ENCODE measurements at regions of chr5 and their contacts with region 1.

Region 1: DNA sequence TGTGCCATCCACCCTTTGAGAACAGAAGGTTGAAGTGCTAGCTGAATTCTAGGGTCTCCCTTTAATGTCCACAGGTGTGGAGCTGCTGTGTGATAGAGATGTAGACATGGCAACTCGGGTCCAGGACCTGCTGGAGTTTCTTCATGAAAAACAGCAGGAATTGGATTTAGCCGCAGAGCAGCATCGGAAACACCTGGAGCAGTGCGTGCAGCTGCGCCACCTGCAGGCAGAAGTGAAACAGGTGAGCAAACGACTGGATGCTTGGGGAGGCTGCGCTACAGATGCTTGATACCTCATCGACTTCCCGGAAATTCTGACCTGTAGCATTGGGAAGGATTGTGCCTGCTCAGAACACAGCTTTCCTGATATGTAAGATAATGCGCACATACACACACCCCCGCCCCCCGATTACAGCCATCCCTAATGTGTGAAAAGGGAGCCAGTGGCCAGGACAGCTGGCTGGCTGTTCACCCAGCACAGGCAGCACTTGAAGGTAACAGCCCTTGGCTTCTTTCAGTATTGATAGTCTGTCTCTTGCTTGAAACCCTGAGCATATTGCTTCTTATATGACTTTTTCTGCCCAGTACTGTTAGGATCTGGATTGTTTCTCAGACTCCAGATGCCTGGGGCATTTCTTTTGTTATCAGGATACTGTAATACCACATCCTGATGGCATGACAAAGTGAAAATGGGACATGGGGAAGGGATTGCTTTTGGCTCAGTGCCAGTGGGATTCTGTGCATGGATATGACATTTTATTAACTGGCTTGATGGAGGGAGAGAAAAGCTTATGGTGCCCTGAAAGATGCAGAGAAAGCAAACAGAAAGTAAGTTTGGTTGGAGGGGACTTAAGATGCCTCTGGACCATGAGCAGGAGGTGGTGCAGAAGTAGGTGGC is 216.8 kb upstream of the OTULINL start:
- DNase-seq: peak; percentile 22
- ATAC-seq: no peak
- H3K4me3 Mint-ChIP-seq: no peak overlapping the region
- H3K27ac Mint-ChIP-seq: peak overlapping the region; percentile 37
- H3K4me1 Mint-ChIP-seq: peaks cover 33% of the 10 kb centered on the region
- H3K27me3 Mint-ChIP-seq: no peaks in the 10 kb centered on the region
- CTCF ChIP-seq: peak; percentile 37

Region 2: DNA sequence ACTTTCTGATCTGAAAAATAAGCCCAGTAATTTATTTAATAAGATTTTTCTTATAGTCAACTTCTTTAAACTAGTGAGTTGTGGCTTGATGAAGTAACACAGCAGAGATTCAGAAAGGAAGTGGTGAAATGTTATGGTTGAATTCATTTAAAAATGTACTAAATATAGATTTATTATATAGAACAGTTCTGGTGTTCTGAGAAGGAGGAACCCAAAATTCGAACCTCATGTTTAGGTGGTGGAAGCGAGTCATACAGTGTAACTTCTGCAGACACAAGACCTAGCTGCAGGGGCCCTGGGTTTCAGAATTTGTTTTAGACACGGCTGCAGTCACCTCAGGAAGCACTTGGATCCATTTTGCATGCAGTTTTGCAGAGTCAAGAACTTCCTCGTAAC is 33.4 kb before region 1 on chr5:
- CTCF ChIA-PET with region 1: interaction called, 10 read pairs
- POLR2A ChIA-PET with region 1: no interaction called
- intact Hi-C with region 1: no loop called
- DNase-seq: peak; percentile 37
- ATAC-seq: peak; percentile 92
- H3K4me3 Mint-ChIP-seq: no peak overlapping the region
- H3K27ac Mint-ChIP-seq: no peak overlapping the region
- H3K4me1 Mint-ChIP-seq: peaks cover 15% of the 10 kb centered on the region
- H3K27me3 Mint-ChIP-seq: no peaks in the 10 kb centered on the region
- CTCF ChIP-seq: no peak

Region 3: GRCh38 chr5:14399054-14399692 is 34.3 kb after region 1 on chr5:
- CTCF ChIA-PET with region 1: interaction called, 11 read pairs
- POLR2A ChIA-PET with region 1: interaction called, 3 read pairs
- intact Hi-C with region 1: no loop called
- DNase-seq: peak; percentile 38
- ATAC-seq: peak; percentile 64
- H3K4me3 Mint-ChIP-seq: no peak overlapping the region
- H3K27ac Mint-ChIP-seq: no peak overlapping the region
- H3K4me1 Mint-ChIP-seq: peaks cover 29% of the 10 kb centered on the region
- H3K27me3 Mint-ChIP-seq: no peaks in the 10 kb centered on the region
- CTCF ChIP-seq: peak; percentile 92

Region 4: GRCh38 chr5:14650052-14650451 is 285.2 kb after region 1 on chr5:
- CTCF ChIA-PET with region 1: interaction called, 172 read pairs
- POLR2A ChIA-PET with region 1: interaction called, 3 read pairs
- intact Hi-C with region 1: loop called (anchors 1 kb)
- DNase-seq: no peak
- ATAC-seq: no peak
- H3K4me3 Mint-ChIP-seq: no peak overlapping the region
- H3K27ac Mint-ChIP-seq: no peak overlapping the region
- H3K4me1 Mint-ChIP-seq: peaks cover 1% of the 10 kb centered on the region
- H3K27me3 Mint-ChIP-seq: peaks cover 15% of the 10 kb centered on the region
- CTCF ChIP-seq: no peak

Region 5: GRCh38 chr5:15013654-15014463 is 649.0 kb after region 1 on chr5:
- CTCF ChIA-PET with region 1: no interaction called
- POLR2A ChIA-PET with region 1: no interaction called
- intact Hi-C with region 1: loop called (anchors 10 kb)
- DNase-seq: no peak
- ATAC-seq: no peak
- H3K4me3 Mint-ChIP-seq: no peak overlapping the region
- H3K27ac Mint-ChIP-seq: no peak overlapping the region
- H3K4me1 Mint-ChIP-seq: no peaks in the 10 kb centered on the region
- H3K27me3 Mint-ChIP-seq: peaks cover under 1% of the 10 kb centered on the region
- CTCF ChIP-seq: peak; percentile 90

Measured in activated CD8-positive, alpha-beta T cell treated with anti-CD3 and anti-CD28 coated beads for 36 hours (primary cell).